ENCODE measurements at regions of chr1 and their contacts with region 1.

Region 1: GRCh38 chr1:52306227-52307006 is 59.6 kb downstream of the CC2D1B start:
- DNase-seq: no peak

Region 2: DNA sequence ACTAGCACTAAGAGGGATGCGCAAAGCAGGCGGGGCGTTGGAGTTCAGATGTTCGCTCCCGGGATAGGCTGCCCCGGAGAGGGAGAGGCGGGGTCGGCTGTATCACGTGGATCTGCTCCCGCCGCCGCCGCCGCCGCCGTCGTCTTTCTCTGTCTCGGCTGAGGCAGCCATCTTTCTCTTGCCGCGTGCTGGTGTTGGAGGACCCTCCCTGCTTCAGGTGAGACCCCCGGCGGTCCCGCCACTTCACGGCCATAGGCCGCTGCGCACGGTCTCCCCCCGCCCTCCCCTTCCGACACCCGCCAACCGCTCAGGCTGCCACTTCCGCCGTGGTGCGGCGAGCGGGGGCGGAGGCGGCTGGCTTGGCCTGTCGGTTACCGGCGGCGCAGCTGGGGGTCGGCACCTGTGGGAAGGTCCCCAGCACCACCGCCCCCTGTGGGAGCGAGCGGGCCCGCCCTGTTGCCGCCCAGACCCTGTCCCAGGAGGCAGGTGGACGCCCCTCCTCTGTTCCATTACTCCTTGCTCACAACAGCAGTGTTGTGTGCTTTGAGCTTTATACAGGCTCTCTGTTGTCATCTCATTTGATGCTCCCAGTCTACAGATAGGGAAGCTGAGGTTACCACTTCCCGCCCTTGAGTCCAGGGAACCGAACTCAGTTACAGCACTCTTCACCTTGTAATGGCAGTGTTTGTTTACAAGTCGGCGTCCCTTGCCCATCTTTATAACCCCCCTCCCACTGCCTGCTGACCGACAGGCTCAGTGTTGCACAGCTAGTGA is 250.1 kb before region 1 on chr1 and contains the start of gene BTF3L4:
- in situ Hi-C with region 1: loop called (anchors 25 kb)
- DNase-seq: peak; percentile 92
- total RNA-seq, gene BTF3L4: 36.4 and 48.5 TPM in 2 replicates

Region 3: GRCh38 chr1:52164604-52165003 is 141.8 kb before region 1 on chr1:
- in situ Hi-C with region 1: no loop called
- DNase-seq: no peak

Measured in SK-MEL-5 (cell line).